CD8-positive, alpha-beta T cell (primary cell): ENCODE measurements at regions of chr3 and their contacts with region 1.

Region 1: GRCh38 chr3:19124746-19125145 is 23.6 kb upstream of the KCNH8 start:
- DNase-seq: no peak
- ATAC-seq: no peak
- H3K4me3 ChIP-seq: no peak overlapping the region
- H3K4me3 Mint-ChIP-seq: no peak overlapping the region
- H3K27ac ChIP-seq: no peak overlapping the region
- H3K27ac Mint-ChIP-seq: no peak overlapping the region
- H3K4me1 ChIP-seq: no peaks in the 10 kb centered on the region
- H3K4me1 Mint-ChIP-seq: no peaks in the 10 kb centered on the region
- H3K27me3 ChIP-seq: no peaks in the 10 kb centered on the region
- H3K27me3 Mint-ChIP-seq: peaks cover 2% of the 10 kb centered on the region
- CTCF ChIP-seq: no peak

Region 2: GRCh38 chr3:19083808-19084207 is 40.9 kb before region 1 on chr3:
- CTCF ChIA-PET with region 1: no interaction called
- POLR2A ChIA-PET with region 1: no interaction called
- intact Hi-C with region 1: loop called in 1 of 2 experiments (anchors 1 kb)
- DNase-seq: peak in 1 of 9 experiments; percentile 19
- ATAC-seq: no peak
- H3K4me3 ChIP-seq: no peak overlapping the region
- H3K4me3 Mint-ChIP-seq: no peak overlapping the region
- H3K27ac ChIP-seq: no peak overlapping the region
- H3K27ac Mint-ChIP-seq: no peak overlapping the region
- H3K4me1 ChIP-seq: no peaks in the 10 kb centered on the region
- H3K4me1 Mint-ChIP-seq: no peaks in the 10 kb centered on the region
- H3K27me3 ChIP-seq: no peaks in the 10 kb centered on the region
- H3K27me3 Mint-ChIP-seq: no peaks in the 10 kb centered on the region
- CTCF ChIP-seq: no peak